ENCODE measurements at regions of chr6 and their contacts with region 1.

Region 1: GRCh38 chr6:99746261-99746895 is 139.7 kb downstream of the PRDM13 start:
- DNase-seq: peak; percentile 52 to 55
- H3K4me3 ChIP-seq: no peak overlapping the region
- H3K27ac ChIP-seq: no peak overlapping the region
- H3K4me1 ChIP-seq: no peaks in the 10 kb centered on the region
- H3K27me3 ChIP-seq: no peaks in the 10 kb centered on the region
- CTCF ChIP-seq: peak; percentile 74 to 92 (median 83)
- POLR2A ChIP-seq: no peak

Region 2: DNA sequence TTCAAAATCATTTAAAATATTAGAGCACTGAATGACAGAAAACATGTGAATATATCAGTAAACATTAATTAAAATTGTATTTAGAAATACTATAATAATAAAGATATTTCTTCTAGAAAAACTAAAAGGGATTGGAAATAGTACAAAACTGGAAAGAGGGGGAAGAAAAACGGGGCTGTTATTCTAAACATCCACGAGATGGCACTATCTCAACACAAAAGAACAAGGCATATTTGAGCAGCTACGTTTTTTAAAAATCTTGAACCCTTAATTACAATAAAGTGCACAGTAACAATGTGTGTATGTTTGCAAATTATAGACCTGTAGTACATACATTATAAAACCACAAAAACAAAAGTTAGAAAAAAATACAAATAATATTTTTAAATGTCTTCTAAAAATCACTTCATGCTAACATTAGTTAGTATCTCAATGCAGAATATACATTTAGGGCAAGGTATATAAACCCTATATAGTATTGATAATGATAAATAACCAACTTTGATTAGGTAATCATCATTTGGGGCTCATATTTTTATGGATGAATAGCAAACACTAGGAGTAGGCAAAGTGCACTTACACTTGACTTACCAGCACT is 278.8 kb before region 1 on chr6:
- intact Hi-C with region 1: loop called (anchors 10 kb)
- DNase-seq: no peak
- H3K4me3 ChIP-seq: no peak overlapping the region
- H3K27ac ChIP-seq: no peak overlapping the region
- H3K4me1 ChIP-seq: no peaks in the 10 kb centered on the region
- H3K27me3 ChIP-seq: no peaks in the 10 kb centered on the region
- CTCF ChIP-seq: peak; percentile 21 to 71 (median 50)
- POLR2A ChIP-seq: no peak

Region 3: GRCh38 chr6:99590728-99591672 is 155.4 kb before region 1 on chr6:
- intact Hi-C with region 1: loop called (anchors 10 kb)
- DNase-seq: no peak
- H3K4me3 ChIP-seq: no peak overlapping the region
- H3K27ac ChIP-seq: no peak overlapping the region
- H3K4me1 ChIP-seq: peaks cover 7 to 20% of the 10 kb centered on the region in 2 donors
- H3K27me3 ChIP-seq: peaks cover 37% of the 10 kb centered on the region
- CTCF ChIP-seq: no peak
- POLR2A ChIP-seq: no peak

Measured in thyroid gland (tissue), 4 donors.